CD4-positive, alpha-beta memory T cell (primary cell): ENCODE measurements at regions of chr7 and their contacts with region 1.

Region 1: GRCh38 chr7:142788303-142789289 is 17.8 kb downstream of the PRSS2 start:
- DNase-seq: peak in 3 of 5 donors; percentile 8 to 47 (median 25)
- H3K4me3 ChIP-seq: peak overlapping the region; percentile 83 to 85
- H3K4me3 Mint-ChIP-seq: peak overlapping the region; percentile 90 to 100 (median 98)
- H3K27ac ChIP-seq: peak overlapping the region; percentile 99
- H3K27ac Mint-ChIP-seq: peak overlapping the region; percentile 95 to 100 (median 96)
- H3K4me1 ChIP-seq: peaks cover 38% of the 10 kb centered on the region
- H3K4me1 Mint-ChIP-seq: peaks cover 14 to 47% (median 24%) of the 10 kb centered on the region in 4 donors
- H3K27me3 ChIP-seq: no peaks in the 10 kb centered on the region
- H3K27me3 Mint-ChIP-seq: no peaks in the 10 kb centered on the region

Region 2: GRCh38 chr7:142323706-142324105 is 464.9 kb before region 1 on chr7:
- CTCF ChIA-PET with region 1: no interaction called
- POLR2A ChIA-PET with region 1: interaction called, 65 read pairs
- intact Hi-C with region 1: no loop called
- DNase-seq: peak in 2 of 5 donors; percentile 31 to 37
- H3K4me3 ChIP-seq: no peak overlapping the region
- H3K4me3 Mint-ChIP-seq: peak overlapping the region in 4 of 8 donors; percentile 6 to 69 (median 18)
- H3K27ac ChIP-seq: no peak overlapping the region
- H3K27ac Mint-ChIP-seq: peak overlapping the region; percentile 56 to 91 (median 71)
- H3K4me1 ChIP-seq: peaks cover 25% of the 10 kb centered on the region
- H3K4me1 Mint-ChIP-seq: peaks cover 13 to 34% (median 19%) of the 10 kb centered on the region in 4 donors
- H3K27me3 ChIP-seq: no peaks in the 10 kb centered on the region
- H3K27me3 Mint-ChIP-seq: peaks cover 0 to 3% of the 10 kb centered on the region in 2 donors

Region 3: DNA sequence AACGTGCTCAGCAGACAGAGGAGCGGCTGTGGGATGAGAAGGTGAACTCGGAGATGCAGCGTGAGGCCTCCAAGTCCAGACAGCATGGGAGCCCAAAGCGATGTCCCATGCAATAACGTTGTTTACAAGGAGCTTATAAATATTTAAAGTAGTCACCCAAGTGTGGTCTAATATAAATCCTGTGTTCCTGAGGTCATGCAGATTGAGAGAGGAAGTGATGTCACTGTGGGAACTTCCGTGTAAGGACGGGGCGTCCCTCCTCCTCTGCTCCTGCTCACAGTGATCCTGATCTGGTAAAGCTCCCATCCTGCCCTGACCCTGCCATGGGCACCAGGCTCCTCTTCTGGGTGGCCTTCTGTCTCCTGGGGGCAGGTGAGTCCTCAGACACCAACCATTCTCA is 436.1 kb before region 1 on chr7:
- CTCF ChIA-PET with region 1: no interaction called
- POLR2A ChIA-PET with region 1: interaction called, 153 read pairs
- intact Hi-C with region 1: no loop called
- DNase-seq: peak in 1 of 5 donors; percentile 19
- H3K4me3 ChIP-seq: peak overlapping the region in 1 of 2 donors; percentile 26
- H3K4me3 Mint-ChIP-seq: peak overlapping the region in 7 of 8 donors; percentile 63 to 83 (median 77)
- H3K27ac ChIP-seq: peak overlapping the region; percentile 38
- H3K27ac Mint-ChIP-seq: peak overlapping the region; percentile 72 to 90 (median 88)
- H3K4me1 ChIP-seq: peaks cover 34% of the 10 kb centered on the region
- H3K4me1 Mint-ChIP-seq: peaks cover 21 to 48% (median 37%) of the 10 kb centered on the region in 4 donors
- H3K27me3 ChIP-seq: no peaks in the 10 kb centered on the region
- H3K27me3 Mint-ChIP-seq: peaks cover 0 to 1% of the 10 kb centered on the region in 2 donors

Region 4: GRCh38 chr7:142523821-142524460 is 264.7 kb before region 1 on chr7:
- CTCF ChIA-PET with region 1: no interaction called
- POLR2A ChIA-PET with region 1: interaction called, 28 read pairs
- intact Hi-C with region 1: no loop called
- DNase-seq: no peak
- H3K4me3 ChIP-seq: no peak overlapping the region
- H3K4me3 Mint-ChIP-seq: no peak overlapping the region
- H3K27ac ChIP-seq: no peak overlapping the region
- H3K27ac Mint-ChIP-seq: peak overlapping the region in 1 of 7 donors; percentile 20
- H3K4me1 ChIP-seq: peaks cover 12% of the 10 kb centered on the region
- H3K4me1 Mint-ChIP-seq: peaks cover 5 to 16% (median 9%) of the 10 kb centered on the region in 4 donors
- H3K27me3 ChIP-seq: no peaks in the 10 kb centered on the region
- H3K27me3 Mint-ChIP-seq: no peaks in the 10 kb centered on the region

Region 5: DNA sequence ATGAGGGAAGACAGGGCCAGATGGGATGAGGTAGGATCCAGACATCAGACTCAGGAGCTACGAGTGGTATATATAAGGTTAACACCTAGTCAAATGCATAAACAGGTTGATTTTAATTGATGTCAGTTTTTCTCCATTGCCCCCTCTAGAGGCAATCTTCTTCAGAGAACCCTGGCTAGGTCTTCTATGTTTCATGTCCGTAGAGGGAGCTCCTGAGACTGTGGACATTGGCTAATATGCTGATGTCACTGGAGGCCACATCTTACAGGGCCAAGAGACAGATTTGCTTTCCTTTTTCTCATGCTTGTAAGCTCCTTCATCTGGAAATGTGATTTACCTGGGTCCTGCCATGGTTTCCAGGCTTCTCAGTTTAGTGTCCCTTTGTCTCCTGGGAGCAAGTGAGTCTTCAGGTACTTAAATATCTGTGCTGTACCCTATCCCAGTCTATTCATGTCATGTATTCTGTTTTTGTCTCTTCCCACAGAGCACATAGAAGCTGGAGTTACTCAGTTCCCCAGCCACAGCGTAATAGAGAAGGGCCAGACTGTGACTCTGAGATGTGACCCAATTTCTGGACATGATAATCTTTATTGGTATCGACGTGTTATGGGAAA is 200.9 kb before region 1 on chr7:
- CTCF ChIA-PET with region 1: no interaction called
- POLR2A ChIA-PET with region 1: interaction called, 14 read pairs
- intact Hi-C with region 1: no loop called
- DNase-seq: peak in 4 of 5 donors; percentile 25 to 35 (median 31)
- H3K4me3 ChIP-seq: no peak overlapping the region
- H3K4me3 Mint-ChIP-seq: peak overlapping the region in 4 of 8 donors; percentile 31 to 61 (median 44)
- H3K27ac ChIP-seq: no peak overlapping the region
- H3K27ac Mint-ChIP-seq: peak overlapping the region in 2 of 7 donors; percentile 12 to 21
- H3K4me1 ChIP-seq: no peaks in the 10 kb centered on the region
- H3K4me1 Mint-ChIP-seq: peaks cover 3 to 7% (median 4%) of the 10 kb centered on the region in 4 donors
- H3K27me3 ChIP-seq: no peaks in the 10 kb centered on the region
- H3K27me3 Mint-ChIP-seq: no peaks in the 10 kb centered on the region

Region 6: GRCh38 chr7:142632291-142633134 is 156.1 kb before region 1 on chr7:
- CTCF ChIA-PET with region 1: interaction called, 50 read pairs
- POLR2A ChIA-PET with region 1: interaction called, 120 read pairs
- intact Hi-C with region 1: loop called (anchors 1 kb)
- DNase-seq: peak; percentile 47 to 68 (median 67)
- H3K4me3 ChIP-seq: no peak overlapping the region
- H3K4me3 Mint-ChIP-seq: peak overlapping the region in 4 of 8 donors; percentile 15 to 51 (median 34)
- H3K27ac ChIP-seq: no peak overlapping the region
- H3K27ac Mint-ChIP-seq: peak overlapping the region in 4 of 7 donors; percentile 35 to 82 (median 72)
- H3K4me1 ChIP-seq: peaks cover 3% of the 10 kb centered on the region
- H3K4me1 Mint-ChIP-seq: peaks cover 3 to 15% (median 8%) of the 10 kb centered on the region in 4 donors
- H3K27me3 ChIP-seq: no peaks in the 10 kb centered on the region
- H3K27me3 Mint-ChIP-seq: peaks cover 1% of the 10 kb centered on the region in 2 donors